ENCODE measurements at regions of chr1 and their contacts with region 1.

Region 1: GRCh38 chr1:233790662-233791375 is 113.7 kb upstream of the SLC35F3 start:
- DNase-seq: peak; percentile 57
- H3K4me3 ChIP-seq: no peak overlapping the region
- H3K27ac ChIP-seq: no peak overlapping the region
- H3K4me1 ChIP-seq: no peaks in the 10 kb centered on the region
- H3K27me3 ChIP-seq: peaks cover 2% of the 10 kb centered on the region
- CTCF ChIP-seq: peak; percentile 95 to 97

Region 2: GRCh38 chr1:233304489-233305102 is 486.2 kb before region 1 on chr1:
- CTCF ChIA-PET with region 1: no interaction called
- dilution Hi-C with region 1: no loop called
- in situ Hi-C with region 1: no loop called
- intact Hi-C with region 1: loop called (anchors 2 kb)
- DNase-seq: peak; percentile 17
- H3K4me3 ChIP-seq: no peak overlapping the region
- H3K27ac ChIP-seq: no peak overlapping the region
- H3K4me1 ChIP-seq: no peaks in the 10 kb centered on the region
- H3K27me3 ChIP-seq: peaks cover 2% of the 10 kb centered on the region
- CTCF ChIP-seq: peak; percentile 77 to 80

Region 3: DNA sequence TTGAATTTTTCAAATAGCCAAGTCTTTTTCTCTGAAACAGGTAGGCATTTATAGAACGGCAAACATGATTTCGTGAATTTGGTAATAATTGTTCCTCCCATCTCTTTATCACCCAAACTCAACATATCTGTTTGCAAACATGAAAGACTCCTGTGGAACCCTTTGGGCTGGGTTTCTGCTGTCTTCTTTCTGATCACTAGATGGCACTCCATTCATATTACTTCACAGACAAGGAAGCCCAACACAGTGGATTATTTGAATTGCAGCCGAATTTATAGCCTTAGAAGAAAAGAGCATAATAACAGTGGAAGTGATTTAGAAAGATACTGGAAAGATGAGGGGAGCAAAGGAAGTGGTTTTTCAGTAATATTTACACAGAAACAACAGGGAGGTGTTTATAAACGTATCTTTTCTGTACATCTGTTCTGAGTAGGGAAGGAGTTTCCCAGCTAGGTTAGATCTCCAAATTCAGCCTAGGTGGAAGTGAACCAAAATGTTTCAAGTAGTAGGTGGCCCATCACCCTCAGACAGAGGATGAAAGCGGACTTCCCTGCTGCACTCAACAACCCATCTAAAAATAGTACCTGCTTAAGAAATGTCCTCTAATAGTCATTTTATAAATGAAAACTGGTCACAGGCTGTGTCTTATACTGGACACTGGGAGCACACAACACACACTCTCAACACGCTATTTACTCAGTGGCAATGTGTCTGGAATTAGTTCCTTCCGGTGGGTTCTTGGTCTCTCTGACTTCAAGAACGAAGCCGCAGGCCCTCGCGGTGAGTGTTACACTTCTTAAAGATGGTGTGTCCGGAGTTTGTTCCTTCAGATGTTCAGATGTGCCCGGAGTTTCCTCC is 395.7 kb before region 1 on chr1:
- CTCF ChIA-PET with region 1: no interaction called
- dilution Hi-C with region 1: no loop called
- in situ Hi-C with region 1: no loop called
- intact Hi-C with region 1: loop called (anchors 1 kb)
- DNase-seq: peak; percentile 43
- H3K4me3 ChIP-seq: no peak overlapping the region
- H3K27ac ChIP-seq: no peak overlapping the region
- H3K4me1 ChIP-seq: no peaks in the 10 kb centered on the region
- H3K27me3 ChIP-seq: peaks cover 1% of the 10 kb centered on the region
- CTCF ChIP-seq: peak; percentile 83 to 89

Region 4: DNA sequence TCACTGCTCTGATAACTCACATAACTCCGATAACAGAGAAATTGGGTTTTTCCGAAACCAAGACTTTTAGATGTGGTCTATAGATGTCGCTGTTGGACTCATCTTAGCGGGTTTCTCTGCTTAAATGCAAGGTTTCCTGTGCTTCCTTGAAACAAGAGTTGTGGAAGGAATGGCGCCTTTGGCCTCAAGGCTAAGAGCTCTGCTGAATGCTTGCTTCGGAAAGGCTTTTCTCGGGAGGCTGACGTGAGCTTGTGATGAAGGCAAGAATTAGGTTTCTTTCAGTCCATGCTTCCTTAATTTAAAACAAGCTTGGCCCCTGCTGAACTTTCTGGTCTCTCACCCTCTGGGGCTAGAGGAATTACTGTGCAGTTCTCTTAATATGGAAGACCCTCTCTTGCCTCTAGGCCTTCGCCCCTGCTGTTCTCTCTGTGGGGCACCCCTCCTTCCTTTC is 349.8 kb before region 1 on chr1:
- CTCF ChIA-PET with region 1: interaction called, 6 read pairs
- dilution Hi-C with region 1: no loop called
- in situ Hi-C with region 1: loop called (anchors 5 to 25 kb)
- intact Hi-C with region 1: loop called (anchors 1 kb)
- DNase-seq: peak; percentile 58
- H3K4me3 ChIP-seq: no peak overlapping the region
- H3K27ac ChIP-seq: no peak overlapping the region
- H3K4me1 ChIP-seq: peaks cover 8% of the 10 kb centered on the region
- H3K27me3 ChIP-seq: no peaks in the 10 kb centered on the region
- CTCF ChIP-seq: peak; percentile 64 to 75

Region 5: GRCh38 chr1:233477359-233477758 is 313.5 kb before region 1 on chr1:
- CTCF ChIA-PET with region 1: no interaction called
- dilution Hi-C with region 1: no loop called
- in situ Hi-C with region 1: no loop called
- intact Hi-C with region 1: loop called (anchors 1 kb)
- DNase-seq: no peak
- H3K4me3 ChIP-seq: no peak overlapping the region
- H3K27ac ChIP-seq: no peak overlapping the region
- H3K4me1 ChIP-seq: peaks cover 9% of the 10 kb centered on the region
- H3K27me3 ChIP-seq: no peaks in the 10 kb centered on the region
- CTCF ChIP-seq: no peak

Region 6: GRCh38 chr1:233518349-233518748 is 272.5 kb before region 1 on chr1:
- CTCF ChIA-PET with region 1: interaction called, 3 read pairs
- dilution Hi-C with region 1: no loop called
- in situ Hi-C with region 1: no loop called
- intact Hi-C with region 1: loop called (anchors 1 kb)
- DNase-seq: peak; percentile 54
- H3K4me3 ChIP-seq: no peak overlapping the region
- H3K27ac ChIP-seq: no peak overlapping the region
- H3K4me1 ChIP-seq: peaks cover 22% of the 10 kb centered on the region
- H3K27me3 ChIP-seq: peaks cover 2% of the 10 kb centered on the region
- CTCF ChIP-seq: peak; percentile 67 to 74

Region 7: DNA sequence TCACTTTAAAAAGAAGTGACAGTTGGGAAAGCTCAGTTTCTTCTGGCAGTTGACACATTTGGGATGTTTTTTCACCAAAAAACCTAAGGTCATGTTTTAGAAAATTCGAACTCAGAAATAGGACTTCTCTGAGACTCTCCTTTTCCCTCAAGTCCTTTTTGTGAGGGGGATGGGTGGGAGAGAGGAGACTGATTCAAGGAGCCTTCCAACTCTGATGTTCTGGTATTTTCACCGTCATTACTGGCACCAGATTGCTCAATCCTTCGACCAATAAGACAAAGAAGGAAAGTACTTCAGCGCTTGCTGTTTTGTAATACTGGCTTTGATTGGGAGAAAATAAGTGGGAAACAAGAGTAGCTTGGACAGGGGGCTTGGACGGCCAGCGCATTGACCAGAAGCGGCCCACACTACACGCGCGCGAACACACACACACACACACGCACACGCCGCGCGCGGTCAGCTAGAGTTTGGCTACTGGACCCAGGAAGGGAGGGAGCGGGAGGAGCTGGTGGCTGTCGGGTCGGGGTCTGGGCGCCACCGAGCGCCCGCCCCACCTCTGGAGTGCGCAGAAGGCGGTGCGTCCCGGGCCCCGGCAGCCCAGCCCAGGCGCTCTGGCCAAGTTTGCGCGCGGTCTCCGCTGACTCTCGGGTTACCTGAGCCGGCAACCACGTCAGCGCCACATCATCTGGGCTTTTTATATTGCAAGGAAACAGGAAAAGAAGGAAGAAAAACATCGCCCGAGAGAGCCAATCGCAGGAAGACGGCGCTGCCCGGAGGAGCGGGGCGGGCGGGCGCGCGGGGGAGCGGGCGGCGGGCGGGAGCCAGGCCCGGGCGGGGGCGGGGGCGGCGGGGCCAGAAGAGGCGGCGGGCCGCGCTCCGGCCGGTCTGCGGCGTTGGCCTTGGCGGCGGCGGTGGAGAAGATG is 177.3 kb before region 1 on chr1 and contains the start of gene KCNK1:
- CTCF ChIA-PET with region 1: no interaction called
- dilution Hi-C with region 1: no loop called
- in situ Hi-C with region 1: no loop called
- intact Hi-C with region 1: loop called (anchors 1 kb)
- DNase-seq: peak; percentile 90
- H3K4me3 ChIP-seq: peak within 1 kb of the TSS; percentile 66 to 97 (median 83)
- H3K27ac ChIP-seq: peak within 1 kb of the TSS; percentile 87
- H3K4me1 ChIP-seq: peaks cover 6% of the 10 kb centered on the region
- H3K27me3 ChIP-seq: no peaks in the 10 kb centered on the region
- CTCF ChIP-seq: no peak
- total RNA-seq, gene KCNK1: 9.0 to 20.6 TPM